ENCODE measurements at regions of chrX and their contacts with region 1.

Region 1: GRCh38 chrX:3231766-3232165 is 114.7 kb downstream of the MXRA5 start:
- DNase-seq: no peak

Region 2: DNA sequence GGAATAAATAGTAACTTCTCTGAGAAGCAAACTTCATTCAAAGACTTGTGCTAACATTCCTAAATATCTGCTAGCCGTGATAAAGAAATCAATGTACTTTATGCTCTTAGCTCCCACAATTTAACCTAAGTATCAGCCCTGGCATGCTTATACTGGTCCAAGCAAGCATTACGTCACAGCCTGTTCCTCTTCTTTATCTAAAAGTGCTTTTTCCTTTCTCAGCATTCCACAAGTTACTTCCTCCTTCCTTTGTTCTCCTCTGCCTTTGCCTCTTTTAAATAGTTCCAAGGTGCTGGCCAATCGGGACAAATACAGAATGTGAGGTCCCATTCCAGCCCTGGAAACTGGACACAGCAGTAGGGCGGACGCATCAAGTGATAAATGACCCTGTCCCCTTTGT is 980.6 kb before region 1 on chrX:
- intact Hi-C with region 1: no loop called
- DNase-seq: no peak

Region 3: DNA sequence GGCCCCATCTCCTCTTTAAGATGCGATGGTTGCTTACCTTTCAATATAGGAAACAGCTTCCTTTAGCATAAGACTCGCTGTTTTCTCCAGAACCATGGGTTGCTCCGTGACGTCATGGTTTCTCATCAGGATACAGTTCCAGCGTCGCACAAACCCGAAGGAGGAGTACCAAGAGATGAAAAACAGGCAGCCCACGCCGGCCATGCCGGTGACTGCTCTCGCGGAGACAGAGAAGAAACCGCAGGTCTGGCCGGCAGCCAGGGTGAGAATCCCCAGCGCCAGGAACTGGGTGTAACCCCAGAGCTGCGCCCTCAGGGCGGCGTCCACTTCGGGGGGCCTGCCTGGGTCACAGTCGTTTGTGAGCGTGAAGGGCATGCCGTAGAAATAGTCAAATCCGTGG is 314.0 kb before region 1 on chrX:
- intact Hi-C with region 1: no loop called
- DNase-seq: no peak

Region 4: GRCh38 chrX:3206314-3206713 is 25.5 kb before region 1 on chrX:
- intact Hi-C with region 1: loop called in 1 of 2 experiments (anchors 2 kb)
- DNase-seq: no peak

Region 5: GRCh38 chrX:3252744-3253143 is 21.0 kb after region 1 on chrX:
- intact Hi-C with region 1: loop called in 1 of 2 experiments (anchors 1 kb)
- DNase-seq: no peak

Region 6: GRCh38 chrX:3280706-3281105 is 48.9 kb after region 1 on chrX:
- intact Hi-C with region 1: no loop called
- DNase-seq: no peak

Measured in posterior vena cava (tissue), 2 donors.